ENCODE measurements at regions of chr18 and their contacts with region 1.

Region 1: DNA sequence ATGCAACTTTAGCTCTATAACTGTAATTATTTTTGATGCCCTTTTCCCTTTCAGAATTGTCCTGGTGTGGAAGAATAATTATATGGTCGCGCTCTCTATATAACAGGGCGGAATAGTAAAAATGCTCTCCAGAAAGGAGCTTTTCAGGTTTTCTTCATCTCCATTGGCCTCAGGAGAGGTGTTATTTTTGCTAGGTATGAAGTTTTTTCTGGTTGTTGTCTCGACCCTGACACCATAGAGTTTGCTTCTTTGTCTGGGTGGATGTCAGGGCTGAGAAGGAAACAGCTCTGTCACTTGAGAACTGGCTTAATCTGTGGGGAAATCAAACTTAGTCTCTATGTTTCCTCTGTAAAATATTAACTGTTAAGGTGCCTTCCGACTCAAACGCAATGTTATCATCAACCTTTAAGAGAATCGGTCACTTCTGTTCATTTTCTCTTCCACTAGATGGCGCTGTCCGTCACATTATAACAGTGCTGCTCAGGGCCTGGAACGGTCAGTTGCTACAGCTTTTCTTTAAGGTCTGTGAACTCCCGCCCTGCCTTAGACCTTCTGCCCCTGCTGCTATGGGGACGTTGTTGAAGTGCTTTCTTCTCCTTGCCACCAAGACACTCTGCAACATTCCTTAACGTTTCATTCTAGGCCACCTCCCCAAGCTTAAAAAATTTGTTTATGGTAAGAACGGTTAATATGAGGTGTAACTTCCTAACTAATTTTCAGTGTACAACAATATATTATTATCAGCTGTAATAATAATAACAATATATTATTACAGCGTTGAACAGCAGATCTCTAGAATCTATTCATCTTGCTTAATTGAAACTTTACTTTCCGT is 23.8 kb upstream of the SERPINB12 start:
- DNase-seq: peak; percentile 45
- CTCF ChIP-seq: peak; percentile 68

Region 2: DNA sequence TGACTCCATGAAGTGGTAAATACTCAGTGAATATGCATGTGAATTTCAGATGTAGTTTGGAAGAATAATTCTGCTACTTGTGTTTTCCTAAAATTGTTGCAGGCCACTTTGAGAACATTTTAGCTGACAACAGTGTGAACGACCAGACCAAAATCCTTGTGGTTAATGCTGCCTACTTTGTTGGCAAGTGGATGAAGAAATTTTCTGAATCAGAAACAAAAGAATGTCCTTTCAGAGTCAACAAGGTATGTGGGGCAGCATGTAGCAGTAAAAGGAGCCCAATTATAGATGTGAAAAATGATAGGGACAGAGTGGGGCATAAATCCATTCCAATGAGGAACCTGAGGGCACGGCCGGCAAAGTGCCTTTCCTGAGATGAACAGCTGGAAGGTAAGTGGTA is 25.5 kb before region 1 on chr18:
- CTCF ChIA-PET with region 1: interaction called, 23 read pairs
- POLR2A ChIA-PET with region 1: no interaction called
- DNase-seq: no peak
- CTCF ChIP-seq: no peak

Region 3: DNA sequence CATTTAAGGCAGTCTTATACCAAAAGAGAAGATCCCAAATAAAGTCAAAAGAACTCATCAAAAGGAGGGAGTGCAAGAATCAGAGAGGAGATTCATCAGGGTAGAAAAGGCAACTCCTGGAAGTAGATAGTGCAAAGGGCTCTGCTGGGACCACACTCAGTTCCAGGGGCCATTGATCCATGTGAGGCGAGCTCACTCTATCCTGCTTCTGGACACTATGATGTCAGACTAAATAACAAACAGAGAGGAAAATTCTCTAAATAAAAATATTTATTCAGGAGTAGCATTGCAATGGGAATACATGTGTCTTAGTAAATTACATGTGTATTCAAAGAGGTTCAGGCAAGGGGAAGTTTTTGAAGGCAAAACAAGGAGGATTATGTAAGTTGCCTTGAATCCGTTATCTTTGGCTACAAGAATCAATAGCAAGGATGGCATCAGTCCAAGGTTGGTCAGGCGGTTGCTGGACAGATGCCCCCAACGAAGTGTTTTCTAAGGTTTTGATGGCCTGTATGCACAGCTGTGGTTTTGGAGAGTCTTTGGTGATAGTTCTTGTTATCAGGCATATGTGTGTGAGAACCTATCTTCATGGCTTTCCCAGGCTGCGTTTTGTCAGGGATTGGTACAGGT is 10.6 kb after region 1 on chr18:
- CTCF ChIA-PET with region 1: interaction called, 60 read pairs
- POLR2A ChIA-PET with region 1: no interaction called
- DNase-seq: no peak
- CTCF ChIP-seq: no peak

Region 4: DNA sequence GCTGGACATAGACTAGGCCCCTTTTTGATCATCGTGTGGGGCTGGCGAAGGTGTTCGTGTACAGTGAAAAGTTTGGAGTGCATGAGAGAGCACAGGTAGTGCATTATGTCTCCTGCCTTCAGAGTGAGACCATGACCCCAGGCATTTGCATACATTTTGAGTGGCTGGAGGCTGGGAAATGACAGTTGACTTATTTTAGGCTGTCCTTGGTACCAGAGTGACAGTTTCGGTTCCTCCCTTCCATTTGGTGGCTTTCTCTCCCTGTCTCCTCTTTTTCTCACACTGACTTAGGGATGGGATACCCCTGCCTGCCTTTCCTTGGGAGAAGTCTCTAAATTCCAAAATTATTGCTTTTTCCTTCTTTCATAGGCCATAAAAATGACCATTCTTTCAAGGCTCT is 43.9 kb after region 1 on chr18:
- CTCF ChIA-PET with region 1: interaction called, 12 read pairs
- POLR2A ChIA-PET with region 1: no interaction called
- DNase-seq: no peak
- CTCF ChIP-seq: no peak

Region 5: GRCh38 chr18:63677500-63678225 is 159.3 kb after region 1 on chr18:
- CTCF ChIA-PET with region 1: interaction called, 28 read pairs
- POLR2A ChIA-PET with region 1: no interaction called
- DNase-seq: no peak
- CTCF ChIP-seq: no peak

Region 6: DNA sequence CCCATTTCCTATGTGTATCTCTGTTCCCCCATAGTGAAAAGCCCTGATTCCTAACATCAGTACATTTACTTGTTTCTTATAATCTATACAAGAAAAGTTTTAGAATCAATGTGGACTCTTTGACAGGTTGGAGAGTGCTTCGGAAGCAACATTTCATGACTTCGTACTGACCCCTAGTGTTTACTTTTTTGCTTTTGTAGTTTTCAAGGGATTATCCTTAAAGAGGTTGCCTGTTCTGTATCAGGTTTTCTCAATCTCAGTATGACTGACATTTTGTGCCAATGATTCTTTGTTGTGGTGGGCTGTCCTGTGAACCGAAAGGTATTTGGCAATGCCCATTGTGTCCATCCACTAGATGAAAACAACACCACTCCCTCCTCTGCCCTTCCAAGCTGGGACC is 325.9 kb after region 1 on chr18:
- CTCF ChIA-PET with region 1: interaction called, 66 read pairs
- POLR2A ChIA-PET with region 1: no interaction called
- DNase-seq: no peak
- CTCF ChIP-seq: peak; percentile 27

Measured in GM10248 (cell line).